Kidney (tissue), 22 donors: ENCODE measurements at regions of chr13 and their contacts with region 1.

Region 1: GRCh38 chr13:97339019-97339987 is 94.7 kb upstream of the RAP2A start:
- DNase-seq: peak in 1 of 5 donors; percentile 75
- H3K4me3 ChIP-seq: no peak overlapping the region
- H3K27ac ChIP-seq: peak overlapping the region; percentile 26 to 40
- H3K4me1 ChIP-seq: peaks cover 0 to 14% (median 5%) of the 10 kb centered on the region in 3 donors
- H3K27me3 ChIP-seq: no peaks in the 10 kb centered on the region
- CTCF ChIP-seq: no peak

Region 2: DNA sequence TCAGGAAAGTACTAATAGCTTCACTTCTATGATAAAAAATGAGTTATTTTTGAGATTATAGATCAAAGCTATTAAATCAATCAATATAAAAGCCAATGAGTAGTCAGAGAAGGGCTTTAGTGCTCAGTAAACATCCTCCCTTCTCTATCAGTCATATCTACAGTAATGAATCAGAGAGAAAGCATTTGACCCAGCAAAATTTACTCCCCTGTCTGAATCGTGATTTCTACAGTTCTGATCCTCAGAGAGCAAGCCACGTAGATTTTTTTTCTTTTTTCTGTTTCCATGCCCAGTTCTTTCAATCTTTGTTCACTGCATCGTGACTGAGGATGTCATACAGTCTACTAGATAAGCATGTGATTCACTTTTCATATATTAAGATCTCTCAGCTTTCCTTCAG is 133.3 kb before region 1 on chr13:
- intact Hi-C with region 1: no loop called
- DNase-seq: no peak
- H3K4me3 ChIP-seq: no peak overlapping the region
- H3K27ac ChIP-seq: no peak overlapping the region
- H3K4me1 ChIP-seq: no peaks in the 10 kb centered on the region
- H3K27me3 ChIP-seq: no peaks in the 10 kb centered on the region
- CTCF ChIP-seq: no peak

Region 3: GRCh38 chr13:97221989-97222700 is 117.2 kb before region 1 on chr13 and contains the start of gene MBNL2:
- intact Hi-C with region 1: loop called (anchors 10 kb)
- DNase-seq: peak; percentile 94 to 97 (median 96)
- H3K4me3 ChIP-seq: peak within 1 kb of the TSS; percentile 78 to 91 (median 91)
- H3K27ac ChIP-seq: peak within 1 kb of the TSS; percentile 97
- H3K4me1 ChIP-seq: peaks cover 7 to 27% (median 24%) of the 10 kb centered on the region in 3 donors
- H3K27me3 ChIP-seq: no peaks in the 10 kb centered on the region
- CTCF ChIP-seq: no peak
- total RNA-seq, gene MBNL2: 70.5 TPM

Region 4: GRCh38 chr13:97588993-97589392 is 249.7 kb after region 1 on chr13:
- intact Hi-C with region 1: no loop called
- DNase-seq: no peak
- H3K4me3 ChIP-seq: no peak overlapping the region
- H3K27ac ChIP-seq: no peak overlapping the region
- H3K4me1 ChIP-seq: peaks cover 0 to 11% (median 0%) of the 10 kb centered on the region in 3 donors
- H3K27me3 ChIP-seq: no peaks in the 10 kb centered on the region
- CTCF ChIP-seq: no peak